Common myeloid progenitor, CD34-positive (primary cell): ENCODE measurements at regions of chr1 and their contacts with region 1.

Region 1: DNA sequence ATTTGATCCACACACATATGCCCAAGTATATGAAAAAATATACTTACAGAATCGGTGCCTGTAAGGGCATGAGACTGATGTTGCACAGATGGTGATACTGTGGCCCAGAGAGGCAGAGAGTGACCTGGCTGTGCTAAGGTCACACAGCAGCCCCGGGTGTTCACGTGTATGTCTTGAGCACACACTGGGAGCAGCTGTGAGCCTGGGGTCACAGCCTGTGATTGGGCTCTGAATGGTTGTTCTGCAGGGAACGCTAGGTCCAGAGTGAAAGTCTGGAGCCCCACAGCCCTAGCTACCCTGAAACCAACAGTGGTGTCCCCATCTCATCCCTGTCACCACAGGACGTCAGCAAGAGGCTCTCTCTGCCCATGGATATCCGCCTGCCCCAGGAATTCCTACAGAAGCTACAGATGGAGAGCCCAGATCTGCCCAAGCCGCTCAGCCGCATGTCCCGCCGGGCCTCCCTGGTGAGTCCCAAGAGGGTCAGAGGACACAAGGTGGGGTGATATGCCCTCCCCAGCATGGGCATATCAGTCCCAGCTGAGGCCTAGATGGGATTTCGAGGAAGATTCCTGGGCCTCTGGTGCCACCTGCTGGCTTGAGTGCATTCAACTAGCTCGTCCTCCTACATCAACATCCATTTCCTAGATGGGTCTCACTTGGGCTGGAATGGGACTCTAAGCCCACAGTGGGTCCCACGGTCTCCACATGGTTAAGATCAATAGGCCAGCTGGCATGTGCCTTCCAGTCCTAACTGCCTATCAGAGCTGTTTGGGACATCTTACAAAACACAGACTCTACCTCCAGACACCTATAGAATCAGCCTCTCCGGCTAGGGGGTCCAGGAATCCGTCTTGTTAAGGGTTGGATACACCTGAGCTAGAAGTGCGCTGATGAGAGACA is 19.7 kb downstream of the CDK18 start:
- DNase-seq: peak; percentile 56 to 82 (median 71)
- H3K4me3 ChIP-seq: no peak overlapping the region
- H3K27ac ChIP-seq: no peak overlapping the region
- H3K4me1 ChIP-seq: peaks cover 0 to 10% (median 3%) of the 10 kb centered on the region in 4 experiments
- H3K27me3 ChIP-seq: no peaks in the 10 kb centered on the region

Region 2: DNA sequence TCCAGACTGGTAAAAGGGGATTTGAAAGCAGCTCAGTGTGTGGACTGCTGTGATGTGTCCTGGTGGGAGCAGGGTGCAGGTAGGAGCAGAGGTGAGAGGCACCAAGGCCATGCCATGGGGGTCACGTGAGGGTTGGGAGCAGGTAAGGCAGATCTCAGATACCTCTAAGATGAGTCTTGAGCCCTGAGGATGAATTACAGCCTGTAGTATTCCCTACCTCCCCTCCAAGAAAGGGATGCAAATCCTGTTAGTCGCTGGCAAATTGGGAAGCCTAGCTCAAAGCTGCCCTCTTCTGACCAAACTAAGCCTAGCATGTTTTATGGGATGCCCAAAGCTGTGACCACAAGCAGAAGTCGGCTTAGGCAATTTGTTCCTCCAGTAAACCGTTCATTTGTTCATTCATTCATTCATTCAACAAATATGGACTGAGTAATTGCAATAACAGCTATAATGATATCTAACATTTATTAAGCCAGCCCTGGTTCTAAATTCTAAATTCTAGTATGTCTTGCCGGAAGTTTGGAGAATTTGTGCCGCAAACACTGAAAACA is 198.7 kb before region 1 on chr1:
- CTCF ChIA-PET with region 1: no interaction called
- POLR2A ChIA-PET with region 1: no interaction called
- DNase-seq: peak; percentile 59 to 76 (median 70)
- H3K4me3 ChIP-seq: no peak overlapping the region
- H3K27ac ChIP-seq: no peak overlapping the region
- H3K4me1 ChIP-seq: peaks cover 6 to 16% (median 15%) of the 10 kb centered on the region in 4 experiments
- H3K27me3 ChIP-seq: peaks cover 0 to 49% (median 0%) of the 10 kb centered on the region in 5 experiments

Region 3: DNA sequence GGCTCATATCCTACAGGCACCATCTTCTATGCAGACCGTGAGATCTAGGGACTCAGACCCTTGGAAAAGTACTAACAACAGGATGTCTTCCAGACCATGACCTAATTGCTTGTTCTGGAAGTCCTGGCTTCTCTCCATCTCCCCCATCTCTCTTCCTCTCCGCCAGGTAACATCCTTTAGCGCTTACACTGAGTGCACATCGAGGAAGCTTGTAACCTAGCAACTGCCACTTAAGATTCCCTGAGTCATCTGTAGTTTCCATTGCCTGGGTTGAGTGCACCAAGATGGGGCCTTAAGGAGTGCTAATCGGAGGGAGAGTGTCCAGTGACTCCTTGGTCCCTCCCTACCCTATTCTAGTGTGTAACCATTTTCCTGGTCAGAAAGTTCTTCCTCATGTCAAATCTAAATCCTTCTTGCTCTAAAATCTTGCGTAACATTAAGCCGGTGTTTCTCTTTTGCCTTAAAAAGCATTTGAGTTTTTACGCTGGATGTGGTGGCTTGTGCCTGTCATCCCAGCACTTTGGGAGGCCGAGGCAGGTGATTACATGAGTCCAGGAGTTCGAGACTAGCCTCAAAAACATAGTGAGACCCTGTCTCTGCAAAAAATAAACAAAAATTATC is 177.1 kb before region 1 on chr1:
- CTCF ChIA-PET with region 1: interaction called, 15 read pairs
- POLR2A ChIA-PET with region 1: no interaction called
- DNase-seq: peak in 2 of 3 donors; percentile 33 to 44
- H3K4me3 ChIP-seq: no peak overlapping the region
- H3K27ac ChIP-seq: no peak overlapping the region
- H3K4me1 ChIP-seq: peaks cover 0 to 22% (median 16%) of the 10 kb centered on the region in 4 experiments
- H3K27me3 ChIP-seq: peaks cover 0 to 46% (median 35%) of the 10 kb centered on the region in 5 experiments

Region 4: DNA sequence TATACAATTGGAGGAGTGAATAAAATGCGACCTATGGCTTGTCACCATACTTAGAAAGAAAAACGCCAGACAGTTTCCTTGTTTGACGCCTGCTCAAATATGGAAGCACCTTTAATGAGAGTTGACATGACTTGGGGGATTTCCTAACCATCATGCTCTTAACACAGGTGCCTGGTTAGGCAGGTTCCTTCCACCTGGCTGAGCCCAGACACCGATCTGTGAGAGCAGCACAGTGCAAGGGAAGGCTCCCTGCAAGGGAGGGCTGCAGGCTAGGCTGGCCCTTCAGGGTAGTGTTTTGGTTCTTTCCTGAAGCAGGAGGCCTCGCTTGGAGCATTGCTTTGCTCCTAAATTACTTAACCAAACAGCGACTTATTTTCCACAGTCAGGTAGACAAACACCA is 142.8 kb before region 1 on chr1:
- CTCF ChIA-PET with region 1: interaction called, 11 read pairs
- POLR2A ChIA-PET with region 1: no interaction called
- DNase-seq: no peak
- H3K4me3 ChIP-seq: no peak overlapping the region
- H3K27ac ChIP-seq: no peak overlapping the region
- H3K4me1 ChIP-seq: no peaks in the 10 kb centered on the region
- H3K27me3 ChIP-seq: peaks cover 0 to 10% (median 6%) of the 10 kb centered on the region in 5 experiments

Region 5: DNA sequence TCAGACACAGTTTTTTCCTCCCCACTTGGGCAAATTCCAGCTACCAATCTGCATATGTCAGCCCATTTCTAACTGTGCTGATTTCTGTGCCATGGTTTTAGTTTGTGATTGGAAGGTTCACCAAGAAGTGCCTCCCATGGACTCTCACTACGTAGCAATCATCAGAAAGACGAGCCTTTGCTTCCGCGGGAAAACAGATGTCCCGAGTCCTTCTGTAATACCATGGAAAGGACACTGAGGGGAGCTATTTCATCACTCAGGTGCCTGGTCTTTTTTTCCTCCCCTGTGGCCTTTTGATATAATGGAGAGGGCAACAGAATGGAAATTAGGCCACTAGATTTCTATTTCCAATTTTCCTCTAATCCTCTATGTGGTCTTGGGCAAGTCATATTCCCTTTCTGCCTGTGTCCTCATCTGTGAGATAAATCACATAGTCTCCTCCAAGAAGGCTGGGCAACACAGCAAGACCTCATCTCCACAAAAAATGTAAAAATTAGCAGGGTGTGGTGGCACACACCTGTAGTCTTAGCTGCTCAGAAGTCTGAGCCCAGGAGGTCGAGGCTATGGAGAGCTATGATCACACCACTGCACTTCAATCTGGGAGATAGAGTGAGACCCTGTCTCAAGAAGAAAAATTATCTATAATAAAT is 127.0 kb before region 1 on chr1:
- CTCF ChIA-PET with region 1: interaction called, 41 read pairs
- POLR2A ChIA-PET with region 1: no interaction called
- DNase-seq: peak; percentile 52 to 69 (median 69)
- H3K4me3 ChIP-seq: no peak overlapping the region
- H3K27ac ChIP-seq: no peak overlapping the region
- H3K4me1 ChIP-seq: no peaks in the 10 kb centered on the region
- H3K27me3 ChIP-seq: peaks cover 1 to 10% (median 4%) of the 10 kb centered on the region in 5 experiments

Region 6: DNA sequence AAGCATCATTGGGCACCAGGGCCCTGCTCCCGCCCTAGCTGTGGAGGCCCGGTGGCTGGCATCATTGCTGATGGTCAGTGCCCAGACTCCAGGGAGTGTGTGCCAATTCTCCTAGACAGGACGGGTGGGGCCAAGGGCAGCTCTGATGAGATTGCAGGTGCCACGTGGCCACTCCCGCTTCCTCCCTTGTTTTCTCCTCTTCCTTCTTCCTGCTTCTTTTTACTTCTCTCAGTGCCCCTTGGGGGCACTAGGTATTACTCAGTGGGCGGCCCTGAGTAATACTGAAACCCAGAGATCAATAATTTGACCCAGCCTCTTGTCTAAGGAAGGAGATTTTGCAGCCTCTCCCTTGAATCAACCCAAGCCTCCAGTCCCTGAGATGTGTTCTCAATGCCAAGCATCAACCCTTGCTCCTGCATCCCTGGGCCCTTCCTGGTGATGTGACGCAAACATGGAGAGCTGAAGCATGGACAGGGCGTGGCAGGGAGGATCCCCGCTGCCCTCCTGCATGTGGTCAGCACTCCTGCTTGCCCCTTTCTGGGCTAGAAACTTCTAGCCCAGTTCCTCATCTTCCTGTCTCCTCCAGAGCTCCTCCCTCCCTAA is 12.7 kb after region 1 on chr1:
- CTCF ChIA-PET with region 1: interaction called, 41 read pairs
- POLR2A ChIA-PET with region 1: no interaction called
- DNase-seq: no peak
- H3K4me3 ChIP-seq: no peak overlapping the region
- H3K27ac ChIP-seq: no peak overlapping the region
- H3K4me1 ChIP-seq: no peaks in the 10 kb centered on the region
- H3K27me3 ChIP-seq: peaks cover 0 to 16% (median 12%) of the 10 kb centered on the region in 5 experiments

Region 7: DNA sequence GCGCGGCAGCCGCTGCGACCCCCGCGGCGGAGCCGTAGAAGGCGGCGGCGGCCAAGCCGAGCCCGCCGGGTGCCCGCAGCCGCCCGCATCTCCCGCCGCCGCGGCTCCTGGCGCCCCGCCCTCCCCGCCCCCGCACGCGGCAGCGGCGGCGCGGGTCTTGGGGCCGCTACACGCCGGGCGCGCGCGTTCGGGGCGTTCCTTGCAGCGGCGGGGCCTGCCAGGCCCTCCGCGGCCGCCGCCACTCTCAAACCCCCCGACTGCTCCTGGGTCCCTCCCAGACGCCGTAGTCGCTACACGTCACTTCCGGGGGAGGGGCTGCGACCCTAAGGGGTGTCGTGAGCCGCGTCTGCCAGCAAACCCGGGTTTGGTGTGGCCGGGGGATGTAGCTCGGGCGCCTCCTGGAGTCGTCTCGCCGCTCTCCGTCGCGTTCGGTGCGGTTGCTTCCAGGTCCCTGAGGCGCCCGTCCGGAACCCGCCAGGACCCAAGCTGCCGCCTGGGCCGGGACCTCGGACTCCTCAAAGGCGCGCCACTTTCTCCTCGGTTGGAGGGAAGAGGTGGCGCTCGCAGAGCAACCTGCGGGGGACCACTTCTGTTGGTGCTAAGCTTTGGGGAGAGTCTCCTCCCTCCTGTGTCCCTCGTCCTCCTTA is 107.7 kb after region 1 on chr1 and contains the start of gene ELK4:
- CTCF ChIA-PET with region 1: interaction called, 17 read pairs
- POLR2A ChIA-PET with region 1: no interaction called
- DNase-seq: peak; percentile 99 to 100 (median 99)
- H3K4me3 ChIP-seq: peak within 1 kb of the TSS; percentile 67 to 95 (median 90)
- H3K27ac ChIP-seq: peak within 1 kb of the TSS; percentile 80 to 92
- H3K4me1 ChIP-seq: peaks cover 8 to 26% (median 21%) of the 10 kb centered on the region in 4 experiments
- H3K27me3 ChIP-seq: no peaks in the 10 kb centered on the region